ENCODE measurements at regions of chr16 and their contacts with region 1.

Region 1: GRCh38 chr16:57300387-57301125 is 16.1 kb upstream of the PLLP start:
- DNase-seq: peak; percentile 99 to 100
- H3K4me3 ChIP-seq: peak overlapping the region; percentile 46 to 56
- H3K27ac ChIP-seq: peak overlapping the region; percentile 98
- H3K4me1 ChIP-seq: peaks cover 16% of the 10 kb centered on the region
- H3K27me3 ChIP-seq: no peaks in the 10 kb centered on the region
- CTCF ChIP-seq: peak; percentile 91 to 99 (median 97)
- POLR2A ChIP-seq: no peak

Region 2: GRCh38 chr16:57186872-57187854 is 113.4 kb before region 1 on chr16:
- intact Hi-C with region 1: no loop called
- DNase-seq: no peak
- H3K4me3 ChIP-seq: peak overlapping the region; percentile 98 to 99
- H3K27ac ChIP-seq: peak overlapping the region; percentile 86
- H3K4me1 ChIP-seq: peaks cover 46% of the 10 kb centered on the region
- H3K27me3 ChIP-seq: no peaks in the 10 kb centered on the region
- CTCF ChIP-seq: no peak
- POLR2A ChIP-seq: no peak

Region 3: DNA sequence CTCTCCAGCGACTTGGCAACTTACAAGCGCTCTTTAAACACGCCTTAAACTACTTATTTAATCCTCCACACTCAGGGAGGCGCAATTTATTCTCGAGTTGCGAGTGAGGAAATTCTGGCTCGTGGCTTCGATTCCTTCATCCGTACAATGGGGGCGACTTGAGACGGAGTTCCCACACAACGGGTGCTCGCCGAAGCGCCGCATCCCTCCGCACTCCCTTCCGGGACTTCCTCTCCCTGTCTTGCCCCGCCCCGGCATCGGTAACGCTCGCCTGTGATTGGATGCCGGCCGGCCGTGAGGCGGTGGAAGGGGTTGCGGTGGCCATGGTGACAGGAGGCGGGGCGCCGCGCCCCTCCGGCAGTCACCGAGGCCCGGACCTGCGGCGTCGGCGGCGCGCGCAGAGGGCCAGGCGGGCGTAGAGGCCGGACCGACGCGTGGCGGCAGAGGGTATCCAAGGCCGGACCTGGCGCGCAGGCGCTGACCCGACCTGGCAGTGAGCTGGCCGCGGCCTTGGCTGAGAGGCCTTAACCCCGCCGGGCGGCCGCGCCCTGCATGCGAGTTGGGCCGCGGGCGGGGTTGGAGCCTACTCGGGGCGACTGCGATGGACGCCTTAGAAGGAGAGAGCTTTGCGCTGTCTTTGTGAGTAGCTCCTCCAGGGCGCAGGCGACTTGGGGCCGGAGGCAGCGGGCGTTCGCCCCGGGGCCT is 55.6 kb before region 1 on chr16 and contains the start of gene ARL2BP:
- intact Hi-C with region 1: no loop called
- DNase-seq: peak in 1 of 2 donors; percentile 99
- H3K4me3 ChIP-seq: peak within 1 kb of the TSS; percentile 71 to 90
- H3K27ac ChIP-seq: peak within 1 kb of the TSS; percentile 87
- H3K4me1 ChIP-seq: peaks cover 12% of the 10 kb centered on the region
- H3K27me3 ChIP-seq: no peaks in the 10 kb centered on the region
- CTCF ChIP-seq: no peak
- POLR2A ChIP-seq: peak in 1 of 2 donors; percentile 63
- total RNA-seq, gene ARL2BP: 44.7 TPM

Region 4: GRCh38 chr16:57372372-57373116 is 72.0 kb after region 1 on chr16 and contains the start of gene CX3CL1:
- intact Hi-C with region 1: loop called (anchors 5 kb)
- DNase-seq: no peak
- H3K4me3 ChIP-seq: peak within 1 kb of the TSS; percentile 52 to 69
- H3K27ac ChIP-seq: peak within 1 kb of the TSS; percentile 84
- H3K4me1 ChIP-seq: peaks cover 39% of the 10 kb centered on the region
- H3K27me3 ChIP-seq: no peaks in the 10 kb centered on the region
- CTCF ChIP-seq: no peak
- POLR2A ChIP-seq: peak in 1 of 2 donors; percentile 49
- total RNA-seq, gene CX3CL1: 24.8 TPM

Region 5: GRCh38 chr16:57422026-57422944 is 121.7 kb after region 1 on chr16:
- intact Hi-C with region 1: loop called (anchors 2 kb)
- DNase-seq: no peak
- H3K4me3 ChIP-seq: no peak overlapping the region
- H3K27ac ChIP-seq: peak overlapping the region; percentile 20
- H3K4me1 ChIP-seq: peaks cover 27% of the 10 kb centered on the region
- H3K27me3 ChIP-seq: no peaks in the 10 kb centered on the region
- CTCF ChIP-seq: peak; percentile 3 to 63 (median 41)
- POLR2A ChIP-seq: no peak

Region 6: DNA sequence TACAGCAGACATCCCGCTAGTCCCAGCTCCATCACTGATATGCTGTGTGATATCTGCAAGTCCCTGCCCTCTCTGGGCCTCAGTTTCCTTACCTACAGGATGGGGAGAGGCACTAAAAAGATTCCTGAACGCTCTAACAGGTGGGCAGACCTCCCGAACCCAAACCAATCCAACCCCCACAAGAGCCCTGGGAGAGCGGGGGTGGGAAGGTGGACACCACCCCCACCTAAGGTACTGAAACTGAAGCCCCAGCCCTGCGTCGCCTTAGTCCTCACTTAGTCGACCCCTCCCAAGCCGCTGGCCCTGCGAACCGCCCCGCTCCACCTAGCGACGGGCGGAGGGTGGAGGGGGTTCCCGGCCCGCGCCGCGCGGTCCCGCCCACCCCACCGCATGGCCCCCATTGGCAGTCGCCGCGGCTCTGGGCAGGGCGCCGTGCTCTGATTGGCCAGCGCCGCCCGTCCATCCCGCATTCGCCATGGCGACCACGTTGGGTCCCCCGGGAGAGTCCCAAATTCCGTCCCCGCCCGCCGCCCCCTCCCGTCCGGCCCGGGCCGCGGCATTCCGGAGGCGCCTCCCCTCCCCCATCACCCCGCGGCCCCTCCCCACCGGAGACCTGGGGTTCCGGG is 235.2 kb after region 1 on chr16:
- intact Hi-C with region 1: loop called (anchors 10 kb)
- DNase-seq: peak; percentile 92 to 96
- H3K4me3 ChIP-seq: peak overlapping the region; percentile 96 to 98
- H3K27ac ChIP-seq: peak overlapping the region; percentile 97
- H3K4me1 ChIP-seq: peaks cover 57% of the 10 kb centered on the region
- H3K27me3 ChIP-seq: no peaks in the 10 kb centered on the region
- CTCF ChIP-seq: no peak
- POLR2A ChIP-seq: no peak

Region 7: DNA sequence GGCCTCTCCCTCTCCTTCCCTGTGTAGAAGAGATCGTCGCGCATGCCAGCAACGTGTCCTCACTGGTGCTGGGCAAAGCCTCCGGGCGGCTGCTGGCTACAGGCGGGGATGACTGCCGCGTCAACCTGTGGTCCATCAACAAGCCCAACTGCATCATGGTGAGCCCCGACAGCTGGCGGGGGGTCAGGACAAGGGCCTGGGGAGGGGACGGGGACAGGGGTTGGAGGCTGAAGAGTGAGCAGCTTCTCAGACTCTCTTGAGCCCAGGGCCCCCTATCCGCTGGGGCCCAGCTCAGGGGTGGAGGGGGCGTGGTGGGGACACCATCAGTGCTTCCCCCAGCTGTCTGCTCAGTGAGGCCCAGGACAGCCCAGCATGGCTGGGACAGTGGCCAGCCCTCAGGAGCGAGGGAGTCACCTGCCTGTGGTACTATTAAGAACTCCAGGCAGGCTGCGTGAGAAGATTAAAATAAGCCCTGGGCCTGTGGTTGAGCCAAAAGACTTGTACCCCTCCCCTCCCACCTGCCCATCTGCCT is 441.2 kb after region 1 on chr16:
- intact Hi-C with region 1: no loop called
- DNase-seq: no peak
- H3K4me3 ChIP-seq: no peak overlapping the region
- H3K27ac ChIP-seq: no peak overlapping the region
- H3K4me1 ChIP-seq: peaks cover 33% of the 10 kb centered on the region
- H3K27me3 ChIP-seq: no peaks in the 10 kb centered on the region
- CTCF ChIP-seq: no peak
- POLR2A ChIP-seq: no peak

Region 8: DNA sequence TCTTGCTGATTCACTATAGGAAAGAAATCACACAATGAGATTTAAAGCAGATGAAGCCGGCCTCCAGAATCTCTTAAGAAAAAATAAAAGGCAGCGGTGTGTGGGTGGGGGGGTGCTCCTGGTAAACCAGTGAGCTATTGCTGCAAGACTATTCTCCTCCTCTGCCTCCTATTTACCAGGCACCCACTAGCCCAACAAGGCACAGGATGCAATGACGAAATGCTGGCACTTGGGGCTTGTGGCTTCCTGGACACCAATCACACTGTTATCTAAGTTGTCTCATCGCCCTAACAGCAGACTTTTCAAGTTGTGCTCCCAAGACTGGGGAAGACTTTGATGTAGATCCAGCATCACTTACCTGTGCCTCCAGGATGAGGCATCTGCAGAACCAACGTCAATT is 1149.2 kb after region 1 on chr16:
- intact Hi-C with region 1: no loop called
- DNase-seq: no peak
- H3K4me3 ChIP-seq: no peak overlapping the region
- H3K27ac ChIP-seq: peak overlapping the region; percentile 27
- H3K4me1 ChIP-seq: peaks cover 28% of the 10 kb centered on the region
- H3K27me3 ChIP-seq: no peaks in the 10 kb centered on the region
- CTCF ChIP-seq: no peak
- POLR2A ChIP-seq: no peak

Measured in vagina (tissue), 2 donors.